Posterior vena cava (tissue), 2 donors: ENCODE measurements at regions of chr2 and their contacts with region 1.

Region 1: DNA sequence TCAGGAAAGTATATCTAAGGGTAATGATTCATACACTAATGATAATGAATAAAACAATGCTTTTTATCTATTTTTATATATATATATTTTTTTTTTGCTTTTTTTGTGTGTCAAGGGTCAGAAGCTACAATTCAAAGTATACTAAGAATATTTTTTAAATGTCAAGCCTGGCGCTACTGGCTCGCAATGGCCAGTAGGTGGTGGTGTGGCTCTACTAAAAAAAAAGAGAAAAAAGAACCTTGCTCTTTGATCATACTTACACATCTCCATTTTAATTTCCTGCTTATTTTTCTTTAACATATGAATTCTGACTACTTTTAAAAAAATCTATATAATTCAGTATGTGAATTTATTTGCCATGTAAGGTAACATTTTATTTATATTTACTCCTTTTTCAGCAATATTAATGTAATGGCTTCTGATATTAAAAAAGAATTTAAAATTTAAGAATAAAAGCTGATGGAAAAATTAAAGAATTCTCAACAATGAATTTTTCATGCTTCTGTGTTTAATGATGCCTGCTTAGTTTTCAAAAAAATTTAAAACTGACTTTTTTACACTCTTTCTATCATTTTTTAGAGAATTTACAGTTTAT is 232.9 kb downstream of the GULP1 start:
- DNase-seq: no peak

Region 2: GRCh38 chr2:188485496-188485895 is 39.1 kb before region 1 on chr2:
- intact Hi-C with region 1: no loop called
- DNase-seq: no peak

Region 3: DNA sequence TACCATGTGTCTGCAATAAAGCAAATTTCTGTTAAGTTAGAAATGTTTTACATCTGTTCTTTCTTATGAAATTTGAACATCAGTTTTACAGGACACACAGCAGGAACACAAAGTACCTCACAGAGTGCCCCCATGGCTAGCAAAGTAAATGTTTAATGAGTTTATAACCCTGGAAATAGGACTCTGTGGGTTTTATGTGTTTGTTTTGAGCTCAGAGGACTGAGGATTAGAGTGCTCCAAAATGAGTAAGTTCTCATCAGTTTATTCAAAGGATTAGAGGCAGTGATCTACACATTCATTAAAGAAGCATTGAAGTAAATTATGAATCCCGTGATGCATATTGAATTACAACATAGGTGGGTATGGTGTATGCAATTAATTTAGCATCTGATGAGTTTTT is 48.8 kb after region 1 on chr2:
- intact Hi-C with region 1: no loop called
- DNase-seq: no peak

Region 4: GRCh38 chr2:188978291-188979081 is 453.9 kb after region 1 on chr2:
- intact Hi-C with region 1: loop called (anchors 5 to 10 kb)
- DNase-seq: no peak

Region 5: DNA sequence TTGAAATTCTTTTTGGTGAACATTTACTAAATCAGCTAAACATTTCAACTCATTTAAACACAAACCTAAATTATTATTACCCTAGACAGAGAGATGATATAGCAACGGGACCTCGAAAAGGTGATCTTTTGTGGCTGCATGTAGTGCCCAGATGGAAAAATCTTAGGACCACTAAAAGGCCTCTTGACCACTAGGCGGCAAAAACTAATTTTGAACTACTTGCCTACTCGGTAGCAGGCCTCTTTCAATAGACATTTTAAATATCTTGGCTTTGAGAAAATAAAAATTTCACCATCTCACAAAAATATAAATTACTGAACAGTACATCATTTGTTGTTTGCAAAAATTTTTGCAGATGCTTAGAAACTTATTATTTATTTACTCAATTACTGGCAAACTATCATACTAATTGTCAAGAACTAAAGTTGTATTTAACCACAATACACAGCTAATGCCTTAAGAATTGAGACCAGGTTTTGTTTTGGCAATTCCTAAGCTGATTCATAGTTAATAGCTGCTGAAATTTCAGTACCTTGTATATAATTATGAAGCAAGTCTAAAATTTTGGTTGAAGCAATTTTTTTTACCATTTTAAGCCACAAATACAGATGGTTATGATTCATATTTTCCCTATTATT is 458.9 kb after region 1 on chr2:
- intact Hi-C with region 1: loop called (anchors 5 to 10 kb)
- DNase-seq: no peak

Region 6: DNA sequence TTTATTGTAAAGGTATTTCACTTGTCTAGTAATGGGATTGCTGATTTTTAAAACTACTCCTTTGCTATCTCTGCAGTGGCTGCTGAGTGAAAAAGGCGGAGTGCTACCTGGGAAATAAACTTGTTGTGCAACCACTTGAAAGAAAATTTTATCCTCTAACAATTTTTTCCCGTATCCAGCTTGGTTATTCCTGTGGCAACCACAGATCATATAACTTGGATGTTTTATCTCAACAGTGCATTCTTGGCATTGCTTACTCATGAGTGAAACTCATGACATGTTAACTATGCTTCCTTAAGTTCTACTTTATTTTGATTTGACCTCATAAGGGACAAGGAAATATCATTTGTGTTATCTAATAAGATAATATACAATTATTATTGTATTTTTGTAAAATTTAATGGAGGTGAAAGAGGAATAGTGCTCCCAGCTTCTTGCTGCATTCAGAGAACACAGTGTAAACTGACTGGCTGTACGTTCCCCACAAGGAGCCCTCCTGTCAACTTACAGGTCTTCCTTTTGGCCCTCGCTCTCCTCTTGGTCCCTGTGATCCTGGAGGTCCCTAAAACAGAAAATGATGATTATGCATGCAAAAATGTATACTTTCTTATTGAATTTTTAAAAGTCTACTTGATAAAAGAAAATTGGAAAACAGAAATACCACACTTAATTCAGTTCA is 572.3 kb after region 1 on chr2:
- intact Hi-C with region 1: loop called in 1 of 2 experiments (anchors 10 kb)
- DNase-seq: no peak

Region 7: DNA sequence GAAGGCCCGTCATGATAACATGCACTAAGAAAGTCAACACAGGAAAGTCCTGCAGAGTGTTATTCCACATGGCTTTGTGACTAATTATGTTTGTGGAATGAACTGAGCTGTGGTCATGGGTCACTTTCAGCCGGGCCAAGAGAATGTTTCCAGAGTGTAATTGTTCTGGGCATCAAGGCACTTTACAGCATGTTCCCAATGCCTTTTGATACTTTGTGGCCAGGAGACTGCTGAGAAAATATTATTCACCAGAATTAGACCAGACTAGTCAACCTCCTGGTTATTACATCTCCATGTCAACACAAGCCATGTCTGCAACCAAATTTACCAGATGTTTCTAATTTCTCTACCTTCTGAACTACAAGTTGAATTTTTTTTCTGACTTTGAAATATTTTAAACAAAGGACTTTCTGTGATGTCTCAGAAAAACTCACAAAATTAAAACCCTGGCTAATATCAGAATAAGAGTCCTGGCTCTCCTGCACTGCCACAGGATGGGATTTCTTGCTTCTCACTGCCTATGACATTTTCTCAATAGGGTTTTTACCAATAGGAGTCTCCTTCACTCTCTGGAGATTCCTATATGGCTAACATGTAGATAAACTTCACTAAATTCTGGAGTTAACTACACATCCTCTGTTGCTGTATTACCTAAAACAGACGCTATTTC is 826.1 kb after region 1 on chr2:
- intact Hi-C with region 1: loop called in 1 of 2 experiments (anchors 5 kb)
- DNase-seq: no peak